OCI-LY7 (cell line): ENCODE measurements at regions of chr6 and their contacts with region 1.

Region 1: DNA sequence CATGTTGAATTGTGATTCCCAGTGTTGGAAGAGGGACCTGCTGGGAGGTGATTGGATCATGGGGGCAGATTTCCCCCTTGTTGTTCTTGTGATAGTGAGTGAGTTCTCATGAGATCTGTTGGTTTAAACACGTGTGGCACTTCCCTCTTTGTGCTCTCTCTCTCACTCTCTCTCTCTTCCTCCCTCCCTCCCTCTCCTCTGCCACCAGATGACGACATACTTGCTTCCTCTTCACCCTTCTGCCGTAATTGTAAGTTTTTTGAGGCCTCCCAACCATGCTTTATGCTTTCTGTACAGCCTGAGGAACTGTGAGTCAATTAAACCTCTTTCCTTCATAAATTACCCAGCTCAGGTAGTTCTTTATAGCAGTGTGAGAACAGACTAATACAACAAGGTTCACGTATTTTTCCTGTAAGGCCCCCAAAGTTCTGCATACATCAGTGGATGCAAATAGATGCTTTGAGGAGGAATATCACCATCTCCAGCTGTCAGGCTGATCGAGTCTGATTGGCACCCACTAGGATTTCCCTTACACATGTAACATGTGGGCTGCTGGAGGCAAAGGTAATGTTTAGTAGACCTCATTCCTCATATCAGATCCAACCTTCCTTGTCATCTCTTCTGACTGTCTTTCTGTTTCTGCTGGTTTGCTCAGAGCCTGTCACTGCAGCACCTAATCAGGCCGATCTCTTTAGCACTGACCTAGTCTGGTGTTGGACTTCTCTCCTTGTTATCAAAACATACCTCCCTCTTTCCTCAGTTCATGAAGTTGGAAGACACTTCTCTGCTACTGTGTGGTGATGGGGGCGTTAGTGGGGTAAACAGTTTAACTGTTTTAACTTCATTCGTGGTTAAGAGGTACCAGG is 54.3 kb upstream of the BACH2 start:
- DNase-seq: peak; percentile 92
- H3K4me3 ChIP-seq: peak overlapping the region; percentile 8
- H3K27ac ChIP-seq: peak overlapping the region; percentile 68
- H3K4me1 ChIP-seq: peaks cover 43% of the 10 kb centered on the region
- CTCF ChIP-seq: no peak

Region 2: GRCh38 chr6:90362318-90362717 is 11.4 kb after region 1 on chr6:
- CTCF ChIA-PET with region 1: interaction called, 12 read pairs
- POLR2A ChIA-PET with region 1: interaction called, 17 read pairs
- intact Hi-C with region 1: no loop called
- DNase-seq: no peak
- H3K4me3 ChIP-seq: no peak overlapping the region
- H3K27ac ChIP-seq: no peak overlapping the region
- H3K4me1 ChIP-seq: no peaks in the 10 kb centered on the region
- CTCF ChIP-seq: no peak

Region 3: DNA sequence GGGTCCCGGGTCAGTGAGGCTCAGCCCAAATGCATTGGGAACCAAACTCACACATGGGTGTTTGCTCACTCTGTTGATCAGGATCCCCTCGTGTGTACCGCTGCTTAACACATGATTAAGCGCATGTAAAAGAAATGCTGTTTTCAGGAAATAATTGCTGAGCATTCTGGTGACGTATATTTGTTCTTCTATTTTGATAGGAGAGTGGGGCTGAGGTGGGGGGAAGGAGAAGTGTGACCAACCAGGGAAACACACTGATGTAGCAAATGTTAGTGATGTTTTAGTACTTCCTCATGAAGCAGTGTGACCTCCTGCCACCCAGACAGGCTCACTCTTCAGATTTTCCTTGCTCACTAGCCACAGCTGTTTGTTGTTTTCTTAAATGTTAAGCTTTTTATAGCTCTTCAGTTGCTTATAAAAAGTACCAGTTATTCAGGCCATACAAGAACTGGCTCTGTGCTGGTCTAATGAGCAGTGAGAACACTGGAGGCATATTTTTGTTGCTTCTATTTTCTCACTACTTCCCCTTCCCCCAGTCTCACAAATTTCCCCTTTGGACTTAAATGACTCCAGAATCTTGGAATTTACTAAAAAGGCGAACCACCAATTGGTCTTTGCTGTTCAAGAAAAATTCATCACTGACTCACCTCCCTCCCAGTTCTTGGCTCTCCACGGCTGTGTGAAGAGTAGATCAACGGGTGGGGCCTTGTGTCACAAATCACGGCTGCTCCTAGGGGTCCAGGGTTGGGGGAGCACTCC is 24.9 kb after region 1 on chr6:
- CTCF ChIA-PET with region 1: interaction called, 4 read pairs
- POLR2A ChIA-PET with region 1: interaction called, 57 read pairs
- intact Hi-C with region 1: no loop called
- DNase-seq: peak; percentile 97
- H3K4me3 ChIP-seq: peak overlapping the region; percentile 68
- H3K27ac ChIP-seq: peak overlapping the region; percentile 100
- H3K4me1 ChIP-seq: peaks cover 98% of the 10 kb centered on the region
- CTCF ChIP-seq: no peak